Left cardiac atrium (tissue), 4 donors: ENCODE measurements at regions of chr18 and their contacts with region 1.

Region 1: GRCh38 chr18:59063300-59063906 is 76.3 kb upstream of the SEC11C start:
- DNase-seq: no peak
- ATAC-seq: no peak

Region 2: GRCh38 chr18:58864146-58865032 is 199.0 kb before region 1 on chr18 and contains the start of gene ZNF532:
- intact Hi-C with region 1: loop called in 1 of 2 experiments (anchors 5 kb)
- DNase-seq: peak; percentile 36
- ATAC-seq: peak; percentile 39 to 53
- total RNA-seq, gene ZNF532: 56.8 to 57.9 TPM

Region 3: DNA sequence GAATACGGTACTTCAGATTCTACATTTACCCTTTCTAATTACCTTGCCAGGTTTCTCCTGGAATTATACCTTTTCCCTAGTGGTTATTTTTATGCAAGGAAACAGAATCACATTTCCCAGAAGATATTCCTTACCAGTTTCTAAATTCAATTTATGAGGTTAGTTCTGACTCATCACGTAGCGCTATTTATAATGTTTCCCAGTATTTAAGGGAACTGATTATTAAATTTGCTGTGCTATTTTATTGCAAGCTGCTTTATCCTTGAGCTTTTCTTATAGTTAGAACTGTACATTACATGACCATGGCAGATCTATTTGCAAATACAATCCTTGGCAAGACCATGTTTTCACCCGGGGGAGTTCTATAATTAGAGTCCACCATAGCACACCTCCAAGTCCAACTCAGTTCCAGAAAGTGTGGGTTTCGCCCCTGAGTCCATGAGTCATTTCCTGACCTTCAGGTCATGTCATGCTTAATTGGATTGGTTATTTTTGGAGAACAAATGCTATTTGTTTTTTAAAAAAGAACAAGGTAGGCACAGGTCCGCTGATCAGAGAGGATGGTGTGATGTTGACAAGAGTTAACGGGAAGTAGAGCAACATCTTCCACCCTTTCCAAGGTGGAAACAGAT is 72.1 kb before region 1 on chr18:
- intact Hi-C with region 1: no loop called
- DNase-seq: no peak
- ATAC-seq: peak; percentile 16 to 43

Region 4: DNA sequence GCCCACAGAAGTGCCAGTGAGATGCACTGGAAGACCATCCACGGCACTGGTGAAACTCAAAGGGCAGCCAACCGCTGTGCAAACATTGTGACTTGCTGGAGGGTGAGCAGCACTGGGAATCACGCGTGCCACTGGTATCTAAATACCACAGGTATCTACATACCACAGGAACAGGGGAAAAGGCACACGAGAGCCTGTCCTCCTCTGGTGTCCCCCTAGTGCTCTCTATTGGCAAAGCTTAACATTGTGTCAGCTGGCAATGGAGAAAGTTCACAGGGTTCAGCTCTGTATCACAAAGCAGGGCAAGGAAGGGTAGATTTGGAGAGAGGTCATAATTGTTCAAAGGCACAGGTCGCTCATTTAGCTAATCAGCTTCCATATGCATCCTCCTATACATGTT is 63.6 kb after region 1 on chr18:
- intact Hi-C with region 1: no loop called
- DNase-seq: no peak
- ATAC-seq: no peak

Region 5: DNA sequence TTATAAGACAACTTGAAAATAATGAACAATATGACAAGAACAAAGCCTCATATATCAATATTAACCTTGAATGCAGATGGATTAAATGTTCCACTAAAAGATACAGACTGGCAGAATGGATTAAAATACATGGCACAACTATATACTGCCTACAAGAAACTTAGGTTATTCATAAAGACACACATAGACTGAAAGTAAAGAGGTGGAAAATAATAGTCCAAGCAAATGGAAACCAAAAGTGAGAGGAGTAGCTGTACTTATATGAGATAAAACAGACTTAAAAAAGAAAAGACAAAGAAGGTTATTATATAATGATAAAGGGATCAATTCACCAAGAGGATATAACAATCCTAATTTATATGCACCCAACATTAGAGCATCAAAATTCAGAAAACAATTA is 277.4 kb after region 1 on chr18:
- intact Hi-C with region 1: no loop called
- DNase-seq: no peak
- ATAC-seq: no peak